AG04449 (cell line): ENCODE measurements at regions of chr3 and their contacts with region 1.

Region 1: GRCh38 chr3:10253731-10254130 is 5.5 kb downstream of the TATDN2 start:
- DNase-seq: no peak
- H3K4me3 ChIP-seq: no peak overlapping the region
- CTCF ChIP-seq: no peak

Region 2: DNA sequence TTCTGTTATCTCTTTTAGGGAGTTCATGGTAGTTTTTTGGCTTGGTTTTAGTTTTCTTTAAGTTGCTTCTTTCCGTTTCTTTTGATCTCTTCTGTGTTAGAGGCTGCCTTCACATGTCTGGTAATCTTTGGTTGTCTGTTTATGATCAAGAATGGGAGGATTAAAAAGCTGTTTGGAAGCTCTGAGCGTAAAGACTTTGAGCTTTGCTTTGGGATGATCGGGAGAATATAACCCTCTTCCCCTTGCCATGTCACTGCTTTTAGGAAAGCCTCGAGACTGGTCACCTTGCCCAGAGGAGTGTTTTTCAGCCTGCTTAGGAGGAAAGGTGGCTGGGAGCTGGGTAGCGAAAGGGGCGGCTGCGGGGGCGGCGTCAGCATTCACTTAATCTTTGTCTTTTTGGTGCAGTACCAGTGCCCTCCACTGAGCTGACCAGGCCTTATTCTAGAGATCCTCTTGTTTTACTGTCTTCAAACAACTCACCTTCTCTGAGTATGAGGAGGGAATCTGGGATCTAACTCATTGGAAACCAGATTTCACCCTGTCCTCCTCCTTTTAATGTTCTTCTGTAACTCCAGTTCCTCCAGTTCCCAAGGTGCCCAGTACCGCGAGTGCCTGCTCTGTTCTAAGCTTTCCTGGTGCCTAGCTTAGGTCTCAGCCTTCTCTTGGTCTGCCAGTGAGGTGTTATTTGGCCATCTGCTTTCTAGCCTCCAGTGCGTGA is 10.1 kb after region 1 on chr3:
- CTCF ChIA-PET with region 1: interaction called, 14 read pairs
- POLR2A ChIA-PET with region 1: no interaction called
- DNase-seq: no peak
- H3K4me3 ChIP-seq: peak overlapping the region; percentile 12; the same call in 1 of the 2 replicates
- CTCF ChIP-seq: peak; percentile 43

Region 3: GRCh38 chr3:10274601-10275000 is 20.9 kb after region 1 on chr3:
- CTCF ChIA-PET with region 1: no interaction called
- POLR2A ChIA-PET with region 1: no interaction called
- DNase-seq: no peak
- H3K4me3 ChIP-seq: no peak overlapping the region
- CTCF ChIP-seq: no peak